Tibial artery (tissue), 4 donors: ENCODE measurements at regions of chr15 and their contacts with region 1.

Region 1: GRCh38 chr15:75367913-75368688 is at the start of gene MAN2C1:
- DNase-seq: peak; percentile 94 to 97
- H3K4me3 ChIP-seq: peak within 1 kb of the TSS; percentile 85 to 92
- H3K27ac ChIP-seq: peak within 1 kb of the TSS; percentile 97 to 98
- H3K4me1 ChIP-seq: peaks cover 0 to 19% (median 12%) of the 10 kb centered on the region in 4 donors
- H3K27me3 ChIP-seq: no peaks in the 10 kb centered on the region
- CTCF ChIP-seq: peak; percentile 62 to 64

Region 2: DNA sequence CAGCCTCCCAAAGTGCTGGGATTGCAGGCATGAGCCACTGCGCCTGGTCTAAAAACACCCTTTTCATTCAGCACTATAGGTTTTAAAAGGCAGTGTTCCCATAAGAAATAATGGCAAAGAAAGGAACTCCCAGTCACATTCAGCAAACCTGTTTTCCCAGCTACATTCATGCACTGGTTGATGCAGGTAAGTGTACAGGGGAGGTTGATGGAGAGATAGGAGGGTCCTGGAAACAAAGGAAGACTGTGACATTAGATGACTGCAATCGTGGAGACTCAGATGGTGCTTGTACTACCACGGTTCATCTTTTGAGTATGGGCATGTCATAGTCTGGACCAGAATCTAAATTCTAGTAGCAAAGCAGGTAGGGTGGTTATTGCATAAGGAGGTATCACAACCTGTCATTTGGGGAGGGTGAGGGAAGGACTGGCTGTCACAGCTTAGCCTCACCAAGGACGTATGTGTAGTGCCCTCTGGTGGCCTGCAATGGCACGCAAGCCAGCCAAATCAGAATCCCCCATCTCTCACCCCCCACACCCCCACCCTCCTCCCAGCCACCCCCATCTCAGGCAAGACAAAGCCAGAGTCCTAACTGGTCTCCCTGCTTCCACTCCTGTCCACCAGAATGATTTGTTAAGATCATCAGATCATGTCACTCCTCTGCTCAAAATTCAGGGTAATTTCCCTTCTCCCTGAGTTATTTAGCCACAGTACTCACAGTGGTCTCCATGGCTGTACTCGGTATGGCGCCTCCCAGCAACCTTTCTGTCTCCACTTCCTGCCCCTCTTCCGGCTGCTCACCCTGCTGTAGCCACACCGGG is 878.4 kb before region 1 on chr15:
- intact Hi-C with region 1: no loop called
- DNase-seq: peak in 1 of 2 donors; percentile 57
- H3K4me3 ChIP-seq: no peak overlapping the region
- H3K27ac ChIP-seq: no peak overlapping the region
- H3K4me1 ChIP-seq: no peaks in the 10 kb centered on the region
- H3K27me3 ChIP-seq: no peaks in the 10 kb centered on the region
- CTCF ChIP-seq: peak; percentile 38 to 50

Region 3: DNA sequence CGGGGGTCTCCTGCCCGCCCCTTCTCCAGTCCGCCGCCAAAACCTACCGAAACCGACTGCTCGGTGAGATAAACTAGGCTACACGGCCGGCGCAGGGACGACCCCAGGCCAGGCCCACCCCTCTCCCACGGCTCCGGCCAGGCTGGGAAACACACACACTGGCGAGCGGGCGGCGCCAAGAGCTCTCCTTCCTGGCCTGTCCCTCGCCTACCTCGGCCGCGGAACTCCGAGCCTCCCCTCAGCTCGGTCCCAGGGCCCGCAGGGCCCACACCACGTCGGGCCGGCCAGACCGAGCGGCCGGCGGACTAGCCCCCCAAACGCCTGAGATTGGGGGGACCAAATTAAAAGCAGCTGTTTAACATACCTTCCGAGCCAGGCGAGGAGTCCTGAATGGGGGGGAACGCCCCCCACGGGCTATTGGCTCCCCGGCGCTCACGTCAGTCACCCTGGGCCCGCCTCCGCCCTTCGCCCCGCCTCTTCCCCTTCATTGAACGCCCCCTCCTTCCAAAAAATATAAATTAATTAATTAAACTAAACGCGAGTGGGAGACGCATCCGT is 87.4 kb after region 1 on chr15:
- intact Hi-C with region 1: loop called (anchors 5 kb)
- DNase-seq: peak; percentile 90 to 94
- H3K4me3 ChIP-seq: peak overlapping the region; percentile 72 to 88
- H3K27ac ChIP-seq: peak overlapping the region; percentile 89 to 96
- H3K4me1 ChIP-seq: peaks cover 0 to 19% (median 9%) of the 10 kb centered on the region in 4 donors
- H3K27me3 ChIP-seq: no peaks in the 10 kb centered on the region
- CTCF ChIP-seq: no peak

Region 4: DNA sequence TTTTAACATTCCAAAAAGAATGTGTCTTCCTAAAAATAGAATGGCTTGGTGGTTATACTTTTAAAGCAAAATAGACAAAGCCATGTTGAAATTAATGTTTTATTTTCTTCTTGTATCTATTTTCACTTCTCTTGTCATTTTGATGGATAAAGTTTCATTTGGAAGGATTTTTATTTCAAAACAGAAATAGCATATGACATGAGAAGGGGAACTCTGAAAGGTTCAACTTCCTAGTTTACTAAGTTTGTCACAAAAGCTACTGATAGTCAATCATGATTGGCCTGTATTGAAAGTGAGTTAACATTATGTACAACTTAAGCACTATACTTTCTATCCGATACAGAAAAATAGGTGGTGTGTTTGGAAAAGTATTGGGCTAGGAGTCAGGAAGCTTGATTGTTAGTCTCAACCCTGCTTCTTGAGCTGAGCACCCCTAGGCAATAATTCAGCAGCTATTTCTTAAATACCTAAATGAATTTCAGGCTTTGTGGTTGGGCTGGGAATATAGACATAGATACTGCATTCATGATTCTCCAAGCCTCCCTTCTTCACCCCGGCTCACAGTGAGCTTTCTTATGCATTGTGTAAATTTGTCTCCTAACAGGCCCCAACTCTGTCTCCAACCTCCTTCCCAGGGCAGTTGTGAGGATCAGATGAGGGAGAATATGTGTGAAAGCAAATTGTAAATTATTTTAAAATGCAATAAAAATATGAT is 391.5 kb after region 1 on chr15:
- intact Hi-C with region 1: loop called (anchors 10 kb)
- DNase-seq: no peak
- H3K4me3 ChIP-seq: no peak overlapping the region
- H3K27ac ChIP-seq: peak overlapping the region; percentile 61 to 86
- H3K4me1 ChIP-seq: peaks cover 0 to 14% (median 7%) of the 10 kb centered on the region in 4 donors
- H3K27me3 ChIP-seq: no peaks in the 10 kb centered on the region
- CTCF ChIP-seq: no peak